ENCODE measurements at regions of chr20 and their contacts with region 1.

Region 1: GRCh38 chr20:54680872-54681619 is 205.7 kb downstream of the DOK5 start:
- DNase-seq: peak in 3 of 14 experiments; percentile 4 to 14 (median 5)
- ATAC-seq: no peak
- H3K4me3 ChIP-seq: no peak overlapping the region
- H3K4me3 Mint-ChIP-seq: no peak overlapping the region
- H3K27ac ChIP-seq: no peak overlapping the region
- H3K27ac Mint-ChIP-seq: no peak overlapping the region
- H3K4me1 ChIP-seq: no peaks in the 10 kb centered on the region
- H3K4me1 Mint-ChIP-seq: no peaks in the 10 kb centered on the region
- H3K27me3 ChIP-seq: peaks cover 0 to 7% of the 10 kb centered on the region in 2 experiments
- H3K27me3 Mint-ChIP-seq: peaks cover 55% of the 10 kb centered on the region
- CTCF ChIP-seq: peak; percentile 57

Region 2: DNA sequence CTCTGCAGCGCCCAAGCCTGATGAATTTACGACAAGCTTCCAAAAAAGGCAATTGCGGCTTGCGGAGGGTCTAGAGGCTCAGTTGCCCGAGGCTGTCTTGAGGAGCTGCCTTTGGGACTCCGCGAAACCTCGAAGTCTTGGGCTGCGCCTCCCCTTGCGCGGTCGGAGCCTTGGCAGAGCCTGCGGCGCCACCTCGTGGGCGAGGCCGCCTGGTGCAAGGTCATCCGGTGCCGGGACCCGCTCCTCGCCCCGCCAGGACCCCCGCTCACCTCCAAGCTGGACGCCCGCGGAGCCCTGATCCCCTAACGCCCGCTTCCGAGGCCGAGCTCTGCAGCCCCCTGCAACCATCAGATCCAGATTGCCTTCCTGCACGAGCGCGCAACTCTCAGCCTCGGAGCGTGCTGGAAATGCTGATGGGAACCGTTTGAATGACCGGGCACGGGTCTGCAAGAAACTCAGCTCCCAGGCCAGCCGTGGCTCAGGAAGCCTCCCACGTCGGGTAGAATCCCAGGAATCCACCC is 1662.9 kb after region 1 on chr20:
- CTCF ChIA-PET with region 1: no interaction called
- POLR2A ChIA-PET with region 1: no interaction called
- intact Hi-C with region 1: loop called (anchors 5 kb)
- DNase-seq: peak in 11 of 14 experiments; percentile 8 to 55 (median 15)
- ATAC-seq: peak; percentile 61
- H3K4me3 ChIP-seq: no peak overlapping the region
- H3K4me3 Mint-ChIP-seq: no peak overlapping the region
- H3K27ac ChIP-seq: no peak overlapping the region
- H3K27ac Mint-ChIP-seq: no peak overlapping the region
- H3K4me1 ChIP-seq: peaks cover 7% of the 10 kb centered on the region
- H3K4me1 Mint-ChIP-seq: peaks cover 10% of the 10 kb centered on the region
- H3K27me3 ChIP-seq: peaks cover 29 to 31% of the 10 kb centered on the region in 2 experiments
- H3K27me3 Mint-ChIP-seq: peaks cover 83% of the 10 kb centered on the region
- CTCF ChIP-seq: peak; percentile 27

Region 3: DNA sequence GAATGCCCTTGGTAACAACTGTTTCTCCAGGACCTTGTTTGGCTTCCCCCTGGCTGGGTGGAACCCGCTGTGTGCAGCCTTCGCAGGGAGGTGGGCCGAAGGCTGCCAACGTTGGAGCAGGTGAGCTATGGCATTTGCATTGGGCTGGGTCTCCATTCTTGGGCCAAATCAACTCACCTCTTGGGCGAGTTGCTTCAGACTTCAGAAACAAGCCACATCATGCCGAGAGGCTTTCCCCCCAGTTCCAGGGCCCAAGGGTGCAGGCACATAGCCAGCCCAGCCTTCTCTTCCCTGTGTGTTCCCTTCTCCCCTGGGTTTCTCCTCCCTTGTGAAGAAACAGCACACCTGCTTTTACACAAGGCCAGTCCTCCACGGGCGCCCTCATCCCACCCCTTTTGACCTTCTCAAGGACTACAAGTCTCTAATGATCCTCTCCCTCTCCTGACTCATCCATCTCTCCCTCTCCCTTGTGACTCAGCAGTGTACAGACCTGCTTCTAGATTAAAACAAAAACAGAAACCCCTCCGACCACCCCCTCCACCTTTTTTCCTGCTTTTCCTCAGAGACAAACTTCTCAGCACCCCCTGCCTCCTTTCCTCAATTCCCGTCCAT is 1893.6 kb after region 1 on chr20:
- CTCF ChIA-PET with region 1: no interaction called
- POLR2A ChIA-PET with region 1: no interaction called
- intact Hi-C with region 1: loop called in 1 of 2 experiments (anchors 5 kb)
- DNase-seq: no peak
- ATAC-seq: no peak
- H3K4me3 ChIP-seq: no peak overlapping the region
- H3K4me3 Mint-ChIP-seq: no peak overlapping the region
- H3K27ac ChIP-seq: no peak overlapping the region
- H3K27ac Mint-ChIP-seq: no peak overlapping the region
- H3K4me1 ChIP-seq: no peaks in the 10 kb centered on the region
- H3K4me1 Mint-ChIP-seq: no peaks in the 10 kb centered on the region
- H3K27me3 ChIP-seq: no peaks in the 10 kb centered on the region
- H3K27me3 Mint-ChIP-seq: peaks cover 32% of the 10 kb centered on the region
- CTCF ChIP-seq: no peak

Measured in CD4-positive, alpha-beta T cell (primary cell).